CD14-positive monocyte (primary cell): ENCODE measurements at regions of chr2 and their contacts with region 1.

Region 1: GRCh38 chr2:12057436-12058166 is 311.2 kb downstream of the LPIN1 start:
- DNase-seq: peak; percentile 70 to 83 (median 76)
- H3K4me3 ChIP-seq: peak overlapping the region in 1 of 3 experiments; percentile 46
- H3K4me3 Mint-ChIP-seq: peak overlapping the region; percentile 52 to 76
- H3K27ac ChIP-seq: no peak overlapping the region
- H3K27ac Mint-ChIP-seq: peak overlapping the region in 6 of 7 donors; percentile 16 to 77 (median 64)
- H3K4me1 ChIP-seq: peaks cover 24 to 42% of the 10 kb centered on the region in 2 donors
- H3K4me1 Mint-ChIP-seq: peaks cover 47% of the 10 kb centered on the region
- H3K27me3 ChIP-seq: peaks cover 0 to 5% of the 10 kb centered on the region in 2 donors
- H3K27me3 Mint-ChIP-seq: peaks cover 7 to 26% (median 14%) of the 10 kb centered on the region in 3 donors
- CTCF ChIP-seq: no peak

Region 2: GRCh38 chr2:11955314-11955713 is 102.3 kb before region 1 on chr2:
- intact Hi-C with region 1: loop called in 1 of 2 experiments (anchors 10 kb)
- DNase-seq: peak in 2 of 3 donors; percentile 12 to 34
- H3K4me3 ChIP-seq: peak overlapping the region in 1 of 3 experiments; percentile 0
- H3K4me3 Mint-ChIP-seq: peak overlapping the region in 1 of 2 donors; percentile 64
- H3K27ac ChIP-seq: no peak overlapping the region
- H3K27ac Mint-ChIP-seq: peak overlapping the region in 4 of 7 donors; percentile 25 to 64 (median 40)
- H3K4me1 ChIP-seq: peaks cover 18 to 19% of the 10 kb centered on the region in 2 donors
- H3K4me1 Mint-ChIP-seq: peaks cover 29% of the 10 kb centered on the region
- H3K27me3 ChIP-seq: no peaks in the 10 kb centered on the region
- H3K27me3 Mint-ChIP-seq: peaks cover 0 to 4% (median 0%) of the 10 kb centered on the region in 3 donors
- CTCF ChIP-seq: no peak